Activated CD4-positive, alpha-beta T cell treated with anti-CD3 and anti-CD28 coated beads for 36 hours (primary cell): ENCODE measurements at regions of chr1 and their contacts with region 1.

Region 1: DNA sequence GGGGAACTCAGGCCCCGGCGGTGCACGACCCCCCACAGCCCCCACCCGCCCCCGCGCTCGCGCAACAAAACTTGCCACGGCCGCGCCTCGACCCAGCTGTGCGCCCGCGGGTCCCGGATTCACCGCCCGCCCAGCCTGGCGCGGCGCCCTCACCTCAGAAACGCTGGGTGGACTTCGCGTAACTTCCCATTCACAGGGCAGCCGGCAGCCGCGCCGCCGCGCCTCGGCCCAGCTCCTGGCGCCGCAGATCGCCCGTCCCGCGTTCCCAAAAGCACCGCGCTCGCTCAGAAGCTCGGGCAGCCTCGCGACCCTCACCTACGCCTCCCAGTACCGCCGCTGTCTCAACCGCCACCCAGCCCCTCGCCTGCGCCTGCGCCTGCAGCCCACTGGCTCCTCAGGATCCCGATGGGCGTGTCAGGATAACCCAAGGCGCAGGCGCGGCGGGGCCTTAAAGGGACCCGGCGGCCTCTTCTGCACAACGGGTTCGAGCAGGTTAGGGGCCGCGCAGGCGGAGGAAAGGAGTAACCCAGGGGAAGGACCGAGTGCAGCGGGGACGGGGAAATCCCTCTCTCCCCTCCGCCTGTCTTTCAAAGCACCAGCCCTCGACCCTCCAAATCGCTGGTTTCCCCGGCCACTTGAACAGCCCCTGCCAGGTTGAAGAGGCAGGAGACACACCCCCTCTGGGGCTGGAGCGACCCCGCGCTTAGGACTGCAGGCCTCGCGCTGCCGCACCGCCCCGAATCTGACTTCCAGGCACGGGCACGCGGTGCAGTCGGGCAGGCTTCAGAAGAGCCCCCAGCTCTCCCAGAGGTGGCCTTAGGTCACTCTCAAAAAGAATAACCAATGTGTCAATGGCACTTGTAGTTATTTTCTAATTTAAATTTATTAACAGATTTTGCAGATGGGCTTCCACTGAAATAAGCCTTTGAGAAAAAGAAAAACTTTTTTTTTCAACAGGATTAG is at the start of gene NBPF1:
- DNase-seq: peak; percentile 98
- ATAC-seq: peak; percentile 98
- H3K4me3 Mint-ChIP-seq: no peak within 1 kb of the TSS
- H3K27ac Mint-ChIP-seq: no peak within 1 kb of the TSS
- H3K4me1 Mint-ChIP-seq: no peaks in the 10 kb centered on the region
- H3K27me3 Mint-ChIP-seq: no peaks in the 10 kb centered on the region
- total RNA-seq, gene NBPF1: 5.8 to 6.2 TPM

Region 2: DNA sequence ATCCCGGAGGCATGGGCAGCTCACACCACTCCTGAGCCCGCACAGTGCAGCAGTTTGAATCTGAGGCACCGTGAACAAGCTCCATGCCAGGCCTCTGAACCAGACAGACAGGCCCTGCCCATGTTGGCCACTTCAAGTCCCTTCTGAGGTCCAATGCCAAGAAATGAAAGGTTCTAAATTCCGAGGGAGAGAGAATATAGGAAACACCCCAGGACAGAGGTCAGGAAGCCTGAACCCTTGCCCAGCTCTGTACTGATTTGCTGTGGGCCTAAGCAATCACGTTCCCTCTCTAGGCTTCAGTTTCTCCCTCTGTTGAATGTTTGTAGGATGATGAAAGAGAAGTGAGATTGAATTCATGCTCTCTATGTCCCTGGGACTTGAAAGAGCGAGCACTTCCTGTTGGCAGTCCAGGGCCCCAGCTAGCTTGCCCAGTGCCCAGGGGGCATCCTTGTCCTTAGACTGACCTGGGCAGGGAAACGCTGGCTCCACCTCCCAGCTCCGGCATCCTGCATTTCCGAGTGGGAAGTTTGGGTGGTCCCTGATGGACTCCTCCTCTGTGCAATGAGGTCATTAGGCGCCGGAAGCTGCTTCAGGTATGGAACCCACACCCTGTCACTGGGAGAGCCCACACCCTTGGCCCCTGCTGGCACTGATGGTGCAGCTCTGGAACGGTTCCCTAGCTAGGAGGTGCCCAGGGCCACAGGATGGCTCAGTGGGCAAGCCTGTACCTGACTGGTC is 1702.3 kb before region 1 on chr1:
- CTCF ChIA-PET with region 1: no interaction called
- POLR2A ChIA-PET with region 1: no interaction called
- intact Hi-C with region 1: no loop called
- DNase-seq: no peak
- ATAC-seq: no peak
- H3K4me3 Mint-ChIP-seq: no peak overlapping the region
- H3K27ac Mint-ChIP-seq: no peak overlapping the region
- H3K4me1 Mint-ChIP-seq: no peaks in the 10 kb centered on the region
- H3K27me3 Mint-ChIP-seq: peaks cover 2% of the 10 kb centered on the region

Region 3: GRCh38 chr1:16236511-16237342 is 376.7 kb before region 1 on chr1 and contains the start of gene CPLANE2:
- CTCF ChIA-PET with region 1: no interaction called
- POLR2A ChIA-PET with region 1: no interaction called
- intact Hi-C with region 1: loop called in 1 of 2 experiments (anchors 1 kb)
- DNase-seq: peak; percentile 98
- ATAC-seq: peak; percentile 85
- H3K4me3 Mint-ChIP-seq: peak within 1 kb of the TSS; percentile 81
- H3K27ac Mint-ChIP-seq: peak within 1 kb of the TSS; percentile 85
- H3K4me1 Mint-ChIP-seq: peaks cover 23% of the 10 kb centered on the region
- H3K27me3 Mint-ChIP-seq: no peaks in the 10 kb centered on the region
- total RNA-seq, gene CPLANE2: 2.4 to 3.7 TPM

Region 4: DNA sequence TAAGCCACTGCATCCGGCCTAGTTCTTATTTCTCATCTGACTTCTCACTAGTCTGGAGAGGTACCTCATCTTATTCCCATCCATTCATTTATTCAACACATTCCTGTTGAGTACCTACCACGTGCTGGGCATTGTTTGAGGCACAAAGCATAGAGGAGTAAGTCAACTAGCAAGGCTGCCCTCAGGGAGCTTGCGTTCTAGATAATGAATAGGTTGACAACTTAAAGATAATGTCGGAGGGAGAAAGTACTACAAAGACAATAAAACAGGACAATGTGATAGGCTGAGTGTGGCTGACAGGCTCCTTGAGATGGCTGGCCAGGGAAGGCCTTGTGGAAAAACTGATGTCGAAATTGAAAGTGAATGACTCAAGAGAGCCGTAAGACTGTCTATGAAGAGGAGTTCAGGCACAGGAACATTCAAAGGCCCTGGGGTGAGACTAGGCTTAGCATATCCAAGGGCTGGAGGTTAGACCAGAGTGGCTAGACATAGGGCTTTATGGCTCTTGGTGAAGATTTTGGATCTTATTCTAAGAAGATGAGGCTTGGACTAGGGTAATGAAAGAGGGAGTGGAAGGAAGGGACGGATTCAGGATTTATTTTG is 194.5 kb before region 1 on chr1:
- CTCF ChIA-PET with region 1: no interaction called
- POLR2A ChIA-PET with region 1: no interaction called
- intact Hi-C with region 1: no loop called
- DNase-seq: peak; percentile 38
- ATAC-seq: peak; percentile 36
- H3K4me3 Mint-ChIP-seq: no peak overlapping the region
- H3K27ac Mint-ChIP-seq: peak overlapping the region; percentile 82
- H3K4me1 Mint-ChIP-seq: peaks cover 30% of the 10 kb centered on the region
- H3K27me3 Mint-ChIP-seq: no peaks in the 10 kb centered on the region

Region 5: DNA sequence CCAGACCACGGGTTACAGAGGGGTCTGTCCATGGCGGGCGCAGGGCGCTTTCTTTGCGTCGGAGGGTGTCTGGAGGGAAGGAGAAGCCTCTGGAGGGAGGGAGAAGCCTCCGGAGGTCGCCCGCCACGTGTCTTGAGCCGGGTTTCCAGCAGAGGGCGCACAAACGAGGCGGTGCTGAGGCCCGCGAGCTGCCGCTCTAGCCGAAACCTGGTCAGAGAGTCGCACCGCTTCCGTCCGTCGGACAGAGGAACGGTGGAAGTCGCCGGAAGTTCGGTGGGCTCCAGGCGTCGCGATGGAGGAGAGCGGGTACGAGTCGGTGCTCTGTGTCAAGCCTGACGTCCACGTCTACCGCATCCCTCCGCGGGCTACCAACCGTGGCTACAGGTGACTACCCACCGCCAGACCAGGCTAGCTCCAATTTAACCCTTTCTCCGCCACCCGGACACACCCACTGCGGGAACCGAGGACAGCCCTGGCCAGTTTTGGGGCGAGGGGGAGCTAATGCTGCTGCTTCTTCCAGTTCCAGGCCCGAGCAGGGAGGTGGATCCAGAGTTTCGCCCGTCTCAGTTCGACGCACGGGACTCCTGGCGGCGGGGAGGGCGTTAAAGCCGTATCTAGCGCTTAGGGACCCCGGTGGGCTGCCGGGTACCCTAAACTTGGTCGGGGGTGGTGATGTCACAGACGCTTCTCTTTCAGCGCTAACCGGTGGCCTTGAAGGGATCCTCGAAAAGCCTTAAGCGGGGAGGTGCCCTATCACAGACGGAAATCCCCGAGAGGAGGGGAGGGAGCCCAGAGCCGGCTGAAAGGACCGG is 172.8 kb before region 1 on chr1 and contains the start of gene NECAP2:
- CTCF ChIA-PET with region 1: interaction called, 4 read pairs
- POLR2A ChIA-PET with region 1: interaction called, 3 read pairs
- intact Hi-C with region 1: loop called in 1 of 2 experiments (anchors 2 kb)
- DNase-seq: peak; percentile 97
- ATAC-seq: peak; percentile 91
- H3K4me3 Mint-ChIP-seq: peak within 1 kb of the TSS; percentile 81
- H3K27ac Mint-ChIP-seq: peak within 1 kb of the TSS; percentile 96
- H3K4me1 Mint-ChIP-seq: peaks cover 36% of the 10 kb centered on the region
- H3K27me3 Mint-ChIP-seq: no peaks in the 10 kb centered on the region
- total RNA-seq, gene NECAP2: 46.5 to 54.2 TPM

Region 6: DNA sequence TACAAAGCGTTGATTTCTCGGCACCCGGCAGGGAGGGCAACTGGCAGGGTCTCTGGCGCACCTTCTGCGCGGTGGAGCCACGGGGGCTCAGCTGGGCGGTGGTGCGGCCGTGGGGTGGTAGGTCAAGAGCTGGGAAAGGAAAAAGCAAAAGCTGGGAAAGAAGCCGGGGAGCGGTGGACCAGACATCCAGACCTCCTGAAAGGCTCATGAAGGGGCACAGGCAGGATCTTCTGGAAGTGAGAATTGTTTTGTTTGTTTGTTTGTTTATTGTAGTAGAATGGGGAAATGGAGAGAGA is 92.2 kb before region 1 on chr1:
- CTCF ChIA-PET with region 1: no interaction called
- POLR2A ChIA-PET with region 1: no interaction called
- intact Hi-C with region 1: loop called in 1 of 2 experiments (anchors 5 kb)
- DNase-seq: no peak
- ATAC-seq: no peak
- H3K4me3 Mint-ChIP-seq: no peak overlapping the region
- H3K27ac Mint-ChIP-seq: no peak overlapping the region
- H3K4me1 Mint-ChIP-seq: no peaks in the 10 kb centered on the region
- H3K27me3 Mint-ChIP-seq: peaks cover 17% of the 10 kb centered on the region

Region 7: GRCh38 chr1:16644193-16644481 is 30.7 kb after region 1 on chr1:
- CTCF ChIA-PET with region 1: interaction called, 3 read pairs
- POLR2A ChIA-PET with region 1: no interaction called
- intact Hi-C with region 1: loop called (anchors 1 kb)
- DNase-seq: no peak
- ATAC-seq: peak; percentile 47
- H3K4me3 Mint-ChIP-seq: no peak overlapping the region
- H3K27ac Mint-ChIP-seq: no peak overlapping the region
- H3K4me1 Mint-ChIP-seq: peaks cover 3% of the 10 kb centered on the region
- H3K27me3 Mint-ChIP-seq: no peaks in the 10 kb centered on the region

Region 8: GRCh38 chr1:16913833-16914662 is 300.6 kb after region 1 on chr1:
- CTCF ChIA-PET with region 1: interaction called, 4 read pairs
- POLR2A ChIA-PET with region 1: no interaction called
- intact Hi-C with region 1: loop called in 1 of 2 experiments (anchors 1 kb)
- DNase-seq: peak; percentile 96
- ATAC-seq: peak; percentile 96
- H3K4me3 Mint-ChIP-seq: peak overlapping the region; percentile 89
- H3K27ac Mint-ChIP-seq: peak overlapping the region; percentile 83
- H3K4me1 Mint-ChIP-seq: peaks cover 31% of the 10 kb centered on the region
- H3K27me3 Mint-ChIP-seq: no peaks in the 10 kb centered on the region